GM12878 (cell line): ENCODE measurements at regions of chr11 and their contacts with region 1.

Region 1: GRCh38 chr11:108853864-108854263 is 189.0 kb downstream of the DDX10 start:
- DNase-seq: no peak
- ATAC-seq: peak; percentile 72
- H3K4me3 ChIP-seq: peak overlapping the region; percentile 61
- H3K27ac ChIP-seq: peak overlapping the region; percentile 80
- H3K4me1 ChIP-seq: peaks cover 13% of the 10 kb centered on the region
- H3K27me3 ChIP-seq: no peaks in the 10 kb centered on the region
- CTCF ChIP-seq: no peak
- EP300 ChIP-seq: no peak
- POLR2A ChIP-seq: peak; percentile 43; the same call in 1 of the 2 replicates
- RAD21 ChIP-seq: no peak

Region 2: DNA sequence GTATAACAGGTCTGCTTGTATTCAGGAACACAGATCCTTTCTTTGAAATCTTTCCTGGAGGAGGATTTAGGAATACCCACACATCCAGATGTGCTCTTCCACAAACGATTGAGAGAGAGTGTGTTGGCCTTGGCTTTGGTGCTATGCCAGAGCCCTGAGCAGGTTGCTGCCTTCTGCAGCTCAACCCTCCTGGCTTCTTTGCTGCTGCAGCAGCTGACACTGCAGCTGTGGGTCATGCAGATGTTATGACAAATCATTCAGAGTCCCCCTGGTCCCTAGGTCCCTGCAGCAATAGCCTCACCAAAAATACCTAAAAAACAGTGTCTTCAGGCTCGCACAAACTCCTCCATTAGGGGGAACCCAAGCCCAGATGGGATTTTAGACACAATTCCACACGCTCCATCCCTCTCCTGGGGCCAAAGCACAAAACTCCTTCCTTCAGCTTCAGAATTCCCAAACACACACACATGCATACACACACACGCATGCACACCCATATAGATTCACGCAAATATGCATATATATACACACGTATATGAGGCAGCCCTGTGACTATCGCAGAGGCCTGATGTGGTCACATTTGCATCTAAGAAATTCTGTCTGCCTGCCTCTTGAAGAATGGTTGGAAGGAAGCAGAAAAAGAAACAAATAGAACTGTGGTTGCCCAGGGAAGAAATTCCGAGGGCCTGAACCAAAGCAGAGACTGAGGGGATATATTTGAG is 1177.4 kb before region 1 on chr11:
- CTCF ChIA-PET with region 1: no interaction called
- POLR2A ChIA-PET with region 1: no interaction called
- RAD21 ChIA-PET with region 1: no interaction called
- SMC1A ChIA-PET with region 1: no interaction called
- in situ Hi-C with region 1: no loop called
- intact Hi-C with region 1: no loop called
- DNase-seq: no peak
- ATAC-seq: peak; percentile 29
- H3K4me3 ChIP-seq: no peak overlapping the region
- H3K27ac ChIP-seq: no peak overlapping the region
- H3K4me1 ChIP-seq: no peaks in the 10 kb centered on the region
- H3K27me3 ChIP-seq: no peaks in the 10 kb centered on the region
- CTCF ChIP-seq: no peak
- EP300 ChIP-seq: no peak
- POLR2A ChIP-seq: no peak
- RAD21 ChIP-seq: no peak

Region 3: DNA sequence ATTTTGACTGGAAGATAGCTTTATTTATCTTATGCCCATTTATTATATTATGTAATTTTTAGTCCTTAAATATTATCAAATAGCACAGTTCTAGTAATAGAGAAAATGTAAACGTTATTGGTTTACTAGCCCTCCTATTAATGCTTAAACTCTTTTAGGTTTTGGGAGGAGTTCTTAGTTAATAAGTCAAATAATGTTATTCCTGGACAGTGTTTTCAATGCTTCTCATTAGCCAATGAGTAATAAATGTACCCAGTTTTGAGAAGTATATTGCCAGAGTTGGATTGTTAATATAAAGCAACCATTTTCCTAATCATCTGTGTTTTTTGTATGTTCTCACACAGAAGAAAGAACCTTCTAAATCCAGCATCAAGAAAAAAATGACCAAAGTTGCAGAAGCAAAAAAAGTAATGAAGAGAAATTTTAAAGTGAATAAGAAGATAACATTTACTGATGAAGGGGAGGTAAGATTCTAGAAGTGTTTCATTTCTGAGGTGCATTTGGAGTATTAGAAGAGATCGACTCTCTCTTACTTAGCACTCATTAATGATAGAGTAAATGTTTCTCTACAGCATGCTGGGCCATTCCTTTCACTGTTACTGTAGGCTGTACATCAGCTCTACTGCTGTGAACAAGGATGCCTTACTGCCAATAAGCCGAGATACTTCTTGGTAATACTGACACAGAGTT is 15.6 kb before region 1 on chr11:
- CTCF ChIA-PET with region 1: interaction called, 7 read pairs
- POLR2A ChIA-PET with region 1: no interaction called
- RAD21 ChIA-PET with region 1: interaction called, 4 read pairs
- SMC1A ChIA-PET with region 1: interaction called, 12 read pairs
- in situ Hi-C with region 1: no loop called
- intact Hi-C with region 1: no loop called
- DNase-seq: no peak
- ATAC-seq: no peak
- H3K4me3 ChIP-seq: no peak overlapping the region
- H3K27ac ChIP-seq: no peak overlapping the region
- H3K4me1 ChIP-seq: no peaks in the 10 kb centered on the region
- H3K27me3 ChIP-seq: no peaks in the 10 kb centered on the region
- CTCF ChIP-seq: no peak
- EP300 ChIP-seq: no peak
- POLR2A ChIP-seq: no peak
- RAD21 ChIP-seq: no peak

Region 4: DNA sequence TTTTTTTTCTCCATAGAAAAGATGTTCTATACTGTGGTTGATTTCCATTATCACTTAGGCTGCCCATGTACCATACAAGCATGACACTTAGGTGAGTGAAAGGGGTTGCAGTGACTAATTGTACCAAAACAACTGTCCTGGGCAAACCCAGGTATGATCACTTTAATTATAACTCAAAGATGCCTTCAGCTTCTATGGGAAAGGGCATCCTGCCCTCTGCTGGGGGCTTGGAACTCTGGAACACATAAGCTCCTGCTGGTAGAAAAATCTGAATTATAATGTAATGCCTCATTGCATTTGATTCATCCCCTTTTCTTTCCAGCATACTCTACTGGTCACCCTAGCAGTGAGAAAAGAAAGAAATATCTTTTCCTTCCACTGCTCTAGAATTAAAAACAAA is 17.3 kb after region 1 on chr11:
- CTCF ChIA-PET with region 1: interaction called, 6 read pairs
- POLR2A ChIA-PET with region 1: interaction called, 3 read pairs
- RAD21 ChIA-PET with region 1: interaction called, 5 read pairs
- SMC1A ChIA-PET with region 1: interaction called, 10 read pairs
- in situ Hi-C with region 1: no loop called
- intact Hi-C with region 1: no loop called
- DNase-seq: no peak
- ATAC-seq: peak; percentile 58
- H3K4me3 ChIP-seq: no peak overlapping the region
- H3K27ac ChIP-seq: no peak overlapping the region
- H3K4me1 ChIP-seq: no peaks in the 10 kb centered on the region
- H3K27me3 ChIP-seq: no peaks in the 10 kb centered on the region
- CTCF ChIP-seq: peak; percentile 43 to 55 (median 48); a peak in 4 of 6 replicates
- EP300 ChIP-seq: no peak
- POLR2A ChIP-seq: no peak
- RAD21 ChIP-seq: peak; percentile 77

Region 5: DNA sequence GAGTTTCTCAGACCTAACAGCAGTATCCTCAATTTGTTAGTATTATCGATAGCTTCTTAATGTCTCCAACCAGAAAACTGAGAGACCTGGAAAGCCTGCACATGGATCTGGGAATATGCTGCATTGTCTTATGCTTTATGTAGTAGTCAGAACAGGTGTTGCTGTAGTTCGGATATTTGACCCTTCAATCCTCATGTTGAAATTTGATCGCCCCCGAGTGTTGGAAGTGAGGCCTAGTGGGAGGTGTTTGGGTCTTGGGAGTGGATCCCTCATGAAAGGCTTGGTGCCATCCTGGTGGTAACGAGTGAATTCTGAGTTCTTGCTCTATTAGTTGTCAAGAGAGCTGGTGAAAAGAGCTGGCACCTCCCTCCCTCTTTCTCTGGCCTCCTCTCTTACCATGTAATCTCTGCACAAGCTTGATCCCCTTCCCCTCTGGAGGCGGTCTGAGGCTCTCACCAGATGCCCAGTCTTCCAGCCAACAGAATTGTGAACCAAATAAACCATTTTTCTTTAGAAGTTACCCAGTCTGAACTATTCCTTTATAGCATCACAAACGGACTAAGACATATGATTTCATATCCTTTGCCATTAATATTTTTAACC is 38.1 kb after region 1 on chr11:
- CTCF ChIA-PET with region 1: no interaction called
- POLR2A ChIA-PET with region 1: no interaction called
- RAD21 ChIA-PET with region 1: no interaction called
- SMC1A ChIA-PET with region 1: no interaction called
- in situ Hi-C with region 1: no loop called
- intact Hi-C with region 1: no loop called
- DNase-seq: no peak
- ATAC-seq: no peak
- H3K4me3 ChIP-seq: no peak overlapping the region
- H3K27ac ChIP-seq: no peak overlapping the region
- H3K4me1 ChIP-seq: no peaks in the 10 kb centered on the region
- H3K27me3 ChIP-seq: no peaks in the 10 kb centered on the region
- CTCF ChIP-seq: no peak
- EP300 ChIP-seq: no peak
- POLR2A ChIP-seq: no peak
- RAD21 ChIP-seq: no peak

Region 6: DNA sequence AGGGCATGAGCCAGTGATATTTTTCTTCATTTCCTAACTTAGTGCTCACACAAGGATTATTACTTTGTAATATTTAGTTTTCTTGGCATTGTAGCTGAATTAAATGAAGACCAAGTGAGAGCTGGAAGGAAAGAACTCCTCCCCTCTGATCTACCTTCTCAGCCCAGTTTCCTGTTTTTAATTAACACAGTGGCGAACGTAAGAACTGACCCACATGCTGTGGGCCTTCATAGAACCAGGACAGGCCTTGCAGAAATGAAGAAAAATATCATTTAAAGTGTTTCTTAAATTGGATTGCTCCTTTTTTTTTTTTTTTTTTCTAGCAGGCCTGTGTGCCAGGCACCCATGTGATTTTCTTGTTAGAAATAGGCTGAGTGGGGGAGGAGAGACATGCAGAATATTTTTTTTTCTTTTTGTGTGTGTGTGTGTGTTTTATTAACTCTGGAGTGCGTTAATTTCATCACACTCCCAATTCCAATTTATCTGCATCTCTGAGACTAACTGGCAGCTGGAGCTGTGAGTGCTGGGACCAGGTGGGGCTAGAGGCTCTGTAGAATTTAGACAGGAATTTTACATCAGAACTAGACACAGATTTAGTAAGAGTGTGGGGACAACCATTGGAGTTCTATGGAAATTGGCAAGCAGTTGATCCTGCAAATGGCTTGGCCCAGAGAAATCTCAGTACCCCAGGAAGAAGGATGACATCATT is 131.5 kb after region 1 on chr11:
- CTCF ChIA-PET with region 1: no interaction called
- POLR2A ChIA-PET with region 1: no interaction called
- RAD21 ChIA-PET with region 1: no interaction called
- SMC1A ChIA-PET with region 1: no interaction called
- in situ Hi-C with region 1: no loop called
- intact Hi-C with region 1: no loop called
- DNase-seq: no peak
- ATAC-seq: no peak
- H3K4me3 ChIP-seq: no peak overlapping the region
- H3K27ac ChIP-seq: no peak overlapping the region
- H3K4me1 ChIP-seq: no peaks in the 10 kb centered on the region
- H3K27me3 ChIP-seq: no peaks in the 10 kb centered on the region
- CTCF ChIP-seq: no peak
- EP300 ChIP-seq: no peak
- POLR2A ChIP-seq: no peak
- RAD21 ChIP-seq: no peak

Region 7: GRCh38 chr11:109037856-109038780 is 184.3 kb after region 1 on chr11:
- CTCF ChIA-PET with region 1: no interaction called
- POLR2A ChIA-PET with region 1: no interaction called
- RAD21 ChIA-PET with region 1: no interaction called
- SMC1A ChIA-PET with region 1: no interaction called
- in situ Hi-C with region 1: no loop called
- intact Hi-C with region 1: no loop called
- DNase-seq: no peak
- ATAC-seq: no peak
- H3K4me3 ChIP-seq: no peak overlapping the region
- H3K27ac ChIP-seq: no peak overlapping the region
- H3K4me1 ChIP-seq: no peaks in the 10 kb centered on the region
- H3K27me3 ChIP-seq: no peaks in the 10 kb centered on the region; a peak in 2 of 4 replicates
- CTCF ChIP-seq: no peak
- EP300 ChIP-seq: no peak
- POLR2A ChIP-seq: no peak
- RAD21 ChIP-seq: no peak